Activated CD4-positive, alpha-beta T cell treated with anti-CD3 and anti-CD28 coated beads, Interleukin-2, amount 10 ng/mL, durations not matched to agents 7 days and 5 days (primary cell): ENCODE measurements at regions of chr5 and their contacts with region 1.

Region 1: DNA sequence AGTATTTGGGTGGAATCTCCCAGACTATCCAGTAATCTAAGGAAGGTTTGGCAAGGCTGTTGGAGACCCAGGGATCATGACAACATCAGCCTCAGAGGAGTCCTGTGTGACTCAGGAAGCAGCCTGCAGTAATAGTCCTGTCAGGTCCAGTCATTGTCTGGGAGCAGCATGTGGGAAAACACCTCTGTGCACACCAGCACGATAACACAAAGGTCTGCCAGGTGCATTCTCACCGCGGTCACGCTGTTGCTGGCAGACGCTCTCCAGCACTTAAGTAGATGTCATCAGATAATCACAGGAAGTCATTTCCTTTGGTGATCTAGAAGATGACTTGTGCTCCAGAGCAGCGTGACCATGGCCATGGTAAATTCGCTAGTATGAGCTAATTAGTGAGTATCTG is 99.2 kb upstream of the IQGAP2 start:
- DNase-seq: peak; percentile 24
- H3K4me3 Mint-ChIP-seq: no peak overlapping the region
- H3K27ac Mint-ChIP-seq: peak overlapping the region; percentile 2
- H3K4me1 Mint-ChIP-seq: peaks cover 54% of the 10 kb centered on the region
- H3K27me3 Mint-ChIP-seq: peaks cover 12% of the 10 kb centered on the region

Region 2: GRCh38 chr5:76104027-76104426 is 199.9 kb before region 1 on chr5:
- CTCF ChIA-PET with region 1: no interaction called
- POLR2A ChIA-PET with region 1: no interaction called
- DNase-seq: peak; percentile 55
- H3K4me3 Mint-ChIP-seq: no peak overlapping the region
- H3K27ac Mint-ChIP-seq: no peak overlapping the region
- H3K4me1 Mint-ChIP-seq: peaks cover 20% of the 10 kb centered on the region
- H3K27me3 Mint-ChIP-seq: peaks cover 40% of the 10 kb centered on the region

Region 3: DNA sequence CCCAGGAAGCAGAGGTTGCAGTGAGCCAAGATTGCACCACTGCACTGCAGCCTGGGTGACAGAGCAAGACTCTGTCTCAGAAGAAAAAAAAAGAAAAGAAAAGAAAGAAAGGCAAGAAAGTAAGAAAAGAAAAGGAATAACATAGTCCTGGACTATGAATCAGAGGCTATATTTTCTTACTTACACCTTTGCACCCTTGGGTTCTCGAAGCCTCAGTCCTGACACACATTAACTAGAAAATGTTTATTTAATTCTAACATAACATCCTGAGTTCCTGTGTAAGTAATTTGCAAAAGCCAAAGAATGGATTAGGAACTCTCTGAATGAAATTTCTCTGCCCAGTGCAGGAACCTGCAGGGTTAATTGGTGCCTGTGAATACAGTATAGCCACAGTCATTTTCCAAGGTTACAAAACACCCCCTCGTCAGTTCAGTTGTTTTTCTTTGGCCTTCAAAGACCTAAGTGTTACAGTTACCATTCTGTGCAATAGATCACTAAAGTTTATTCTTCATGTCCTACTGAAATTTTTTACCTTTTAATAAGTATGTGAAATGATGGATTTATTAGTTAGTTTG is 73.1 kb before region 1 on chr5:
- CTCF ChIA-PET with region 1: no interaction called
- POLR2A ChIA-PET with region 1: no interaction called
- DNase-seq: no peak
- H3K4me3 Mint-ChIP-seq: no peak overlapping the region
- H3K27ac Mint-ChIP-seq: no peak overlapping the region
- H3K4me1 Mint-ChIP-seq: no peaks in the 10 kb centered on the region
- H3K27me3 Mint-ChIP-seq: peaks cover 2% of the 10 kb centered on the region

Region 4: GRCh38 chr5:76314643-76315042 is 10.7 kb after region 1 on chr5:
- CTCF ChIA-PET with region 1: interaction called, 30 read pairs
- POLR2A ChIA-PET with region 1: interaction called, 4 read pairs
- DNase-seq: no peak
- H3K4me3 Mint-ChIP-seq: no peak overlapping the region
- H3K27ac Mint-ChIP-seq: no peak overlapping the region
- H3K4me1 Mint-ChIP-seq: peaks cover 12% of the 10 kb centered on the region
- H3K27me3 Mint-ChIP-seq: peaks cover 5% of the 10 kb centered on the region

Region 5: DNA sequence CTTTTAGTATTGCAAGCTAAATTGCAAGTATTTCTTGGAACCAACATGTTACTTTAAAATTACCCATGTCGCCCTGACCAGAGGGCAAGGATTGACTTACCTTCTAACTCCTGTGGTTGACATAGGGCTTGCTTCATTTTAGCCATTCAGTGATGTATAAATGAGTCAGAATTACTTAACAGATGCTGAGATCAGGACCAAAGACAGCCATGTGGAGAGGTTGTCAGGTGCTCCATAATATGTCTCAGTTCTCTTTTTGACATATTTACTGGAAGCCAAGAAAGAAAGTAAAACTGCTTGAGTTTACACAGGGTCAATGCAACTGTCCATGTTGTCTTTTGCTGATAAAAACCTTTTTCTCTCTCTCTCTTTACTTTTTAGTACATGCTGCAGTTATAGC is 286.1 kb after region 1 on chr5:
- CTCF ChIA-PET with region 1: no interaction called
- POLR2A ChIA-PET with region 1: no interaction called
- DNase-seq: no peak
- H3K4me3 Mint-ChIP-seq: no peak overlapping the region
- H3K27ac Mint-ChIP-seq: no peak overlapping the region
- H3K4me1 Mint-ChIP-seq: peaks cover 3% of the 10 kb centered on the region
- H3K27me3 Mint-ChIP-seq: no peaks in the 10 kb centered on the region